ENCODE measurements at regions of chr12 and their contacts with region 1.

Region 1: GRCh38 chr12:113310489-113310888 is 24.4 kb downstream of the SLC8B1 start:
- DNase-seq: no peak
- H3K4me3 Mint-ChIP-seq: no peak overlapping the region
- H3K27ac Mint-ChIP-seq: no peak overlapping the region
- H3K4me1 Mint-ChIP-seq: peaks cover 2% of the 10 kb centered on the region
- H3K27me3 Mint-ChIP-seq: no peaks in the 10 kb centered on the region

Region 2: GRCh38 chr12:113261847-113262470 is 48.5 kb before region 1 on chr12:
- CTCF ChIA-PET with region 1: no interaction called
- POLR2A ChIA-PET with region 1: no interaction called
- DNase-seq: peak; percentile 57
- H3K4me3 Mint-ChIP-seq: peak overlapping the region; percentile 52
- H3K27ac Mint-ChIP-seq: peak overlapping the region; percentile 88
- H3K4me1 Mint-ChIP-seq: peaks cover 44% of the 10 kb centered on the region
- H3K27me3 Mint-ChIP-seq: no peaks in the 10 kb centered on the region

Region 3: GRCh38 chr12:113325916-113326315 is 15.4 kb after region 1 on chr12:
- CTCF ChIA-PET with region 1: interaction called, 12 read pairs
- POLR2A ChIA-PET with region 1: no interaction called
- DNase-seq: no peak
- H3K4me3 Mint-ChIP-seq: no peak overlapping the region
- H3K27ac Mint-ChIP-seq: no peak overlapping the region
- H3K4me1 Mint-ChIP-seq: peaks cover 13% of the 10 kb centered on the region
- H3K27me3 Mint-ChIP-seq: no peaks in the 10 kb centered on the region